ENCODE measurements at regions of chr14 and their contacts with region 1.

Region 1: DNA sequence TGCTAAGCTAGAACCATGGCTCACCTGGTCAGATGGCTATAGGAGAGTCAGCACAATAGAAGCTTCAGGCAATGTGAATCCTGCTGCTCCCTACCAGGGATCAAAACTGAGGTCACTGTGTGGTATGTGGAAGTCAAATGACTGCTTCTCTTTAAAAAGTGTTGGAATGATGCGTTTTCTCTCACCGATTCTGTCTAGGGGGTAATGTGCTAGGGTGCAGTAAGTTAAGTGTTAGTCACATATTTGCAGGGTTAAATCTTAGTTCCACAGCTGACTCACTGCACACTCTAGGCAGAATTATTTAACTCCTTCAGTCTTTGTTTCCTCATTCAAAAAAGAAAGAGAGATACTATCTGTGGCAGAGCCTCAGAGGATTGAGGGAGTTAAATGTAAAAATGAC is 696.6 kb downstream of the DIO2 start:
- DNase-seq: no peak
- ATAC-seq: no peak
- H3K4me3 ChIP-seq: no peak overlapping the region
- H3K4me3 Mint-ChIP-seq: no peak overlapping the region
- H3K27ac ChIP-seq: no peak overlapping the region
- H3K27ac Mint-ChIP-seq: no peak overlapping the region
- H3K4me1 ChIP-seq: no peaks in the 10 kb centered on the region
- H3K4me1 Mint-ChIP-seq: no peaks in the 10 kb centered on the region
- H3K27me3 ChIP-seq: no peaks in the 10 kb centered on the region
- H3K27me3 Mint-ChIP-seq: no peaks in the 10 kb centered on the region
- CTCF ChIP-seq: no peak

Region 2: GRCh38 chr14:80003138-80003537 is 488.4 kb after region 1 on chr14:
- intact Hi-C with region 1: loop called (anchors 5 kb)
- DNase-seq: no peak
- ATAC-seq: no peak
- H3K4me3 ChIP-seq: no peak overlapping the region
- H3K4me3 Mint-ChIP-seq: no peak overlapping the region
- H3K27ac ChIP-seq: no peak overlapping the region
- H3K27ac Mint-ChIP-seq: no peak overlapping the region
- H3K4me1 ChIP-seq: no peaks in the 10 kb centered on the region
- H3K4me1 Mint-ChIP-seq: no peaks in the 10 kb centered on the region
- H3K27me3 ChIP-seq: no peaks in the 10 kb centered on the region
- H3K27me3 Mint-ChIP-seq: no peaks in the 10 kb centered on the region
- CTCF ChIP-seq: no peak

Measured in natural killer cell (primary cell).